ENCODE measurements at regions of chr2 and their contacts with region 1.

Region 1: GRCh38 chr2:142756430-142756829 is 121.0 kb upstream of the KYNU start:
- DNase-seq: peak; percentile 64
- H3K4me3 ChIP-seq: no peak overlapping the region
- H3K27ac ChIP-seq: no peak overlapping the region
- H3K4me1 ChIP-seq: peaks cover 2% of the 10 kb centered on the region
- H3K27me3 ChIP-seq: no peaks in the 10 kb centered on the region
- CTCF ChIP-seq: no peak

Region 2: GRCh38 chr2:141242008-141242407 is 1514.4 kb before region 1 on chr2:
- CTCF ChIA-PET with region 1: no interaction called
- dilution Hi-C with region 1: no loop called
- in situ Hi-C with region 1: no loop called
- intact Hi-C with region 1: no loop called
- DNase-seq: no peak
- H3K4me3 ChIP-seq: no peak overlapping the region
- H3K27ac ChIP-seq: no peak overlapping the region
- H3K4me1 ChIP-seq: no peaks in the 10 kb centered on the region
- H3K27me3 ChIP-seq: no peaks in the 10 kb centered on the region
- CTCF ChIP-seq: no peak

Region 3: GRCh38 chr2:142315346-142315745 is 441.1 kb before region 1 on chr2:
- CTCF ChIA-PET with region 1: no interaction called
- dilution Hi-C with region 1: no loop called
- in situ Hi-C with region 1: no loop called
- intact Hi-C with region 1: no loop called
- DNase-seq: no peak
- H3K4me3 ChIP-seq: no peak overlapping the region
- H3K27ac ChIP-seq: no peak overlapping the region
- H3K4me1 ChIP-seq: no peaks in the 10 kb centered on the region
- H3K27me3 ChIP-seq: no peaks in the 10 kb centered on the region
- CTCF ChIP-seq: no peak

Region 4: DNA sequence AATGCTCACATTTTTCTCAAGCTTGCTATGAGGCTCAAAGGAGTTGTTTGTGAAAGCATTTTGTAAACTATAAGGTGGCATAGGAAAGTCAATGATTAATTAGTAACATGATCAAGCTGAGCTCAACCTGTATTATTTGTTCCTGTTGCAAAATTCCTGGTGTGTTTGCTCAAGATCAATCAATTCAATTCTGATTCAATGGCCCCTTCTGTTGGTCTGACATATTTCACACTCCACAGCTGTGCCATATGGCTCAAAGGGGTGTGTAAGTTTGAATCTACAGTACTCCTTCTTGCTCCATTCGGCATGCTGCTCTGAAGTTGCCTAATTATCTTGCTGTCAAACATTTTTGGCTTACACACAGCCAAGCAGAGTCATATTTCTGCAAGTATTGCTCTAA is 284.0 kb before region 1 on chr2:
- CTCF ChIA-PET with region 1: no interaction called
- dilution Hi-C with region 1: no loop called
- in situ Hi-C with region 1: no loop called
- intact Hi-C with region 1: no loop called
- DNase-seq: no peak
- H3K4me3 ChIP-seq: no peak overlapping the region
- H3K27ac ChIP-seq: no peak overlapping the region
- H3K4me1 ChIP-seq: no peaks in the 10 kb centered on the region
- H3K27me3 ChIP-seq: no peaks in the 10 kb centered on the region
- CTCF ChIP-seq: no peak

Region 5: DNA sequence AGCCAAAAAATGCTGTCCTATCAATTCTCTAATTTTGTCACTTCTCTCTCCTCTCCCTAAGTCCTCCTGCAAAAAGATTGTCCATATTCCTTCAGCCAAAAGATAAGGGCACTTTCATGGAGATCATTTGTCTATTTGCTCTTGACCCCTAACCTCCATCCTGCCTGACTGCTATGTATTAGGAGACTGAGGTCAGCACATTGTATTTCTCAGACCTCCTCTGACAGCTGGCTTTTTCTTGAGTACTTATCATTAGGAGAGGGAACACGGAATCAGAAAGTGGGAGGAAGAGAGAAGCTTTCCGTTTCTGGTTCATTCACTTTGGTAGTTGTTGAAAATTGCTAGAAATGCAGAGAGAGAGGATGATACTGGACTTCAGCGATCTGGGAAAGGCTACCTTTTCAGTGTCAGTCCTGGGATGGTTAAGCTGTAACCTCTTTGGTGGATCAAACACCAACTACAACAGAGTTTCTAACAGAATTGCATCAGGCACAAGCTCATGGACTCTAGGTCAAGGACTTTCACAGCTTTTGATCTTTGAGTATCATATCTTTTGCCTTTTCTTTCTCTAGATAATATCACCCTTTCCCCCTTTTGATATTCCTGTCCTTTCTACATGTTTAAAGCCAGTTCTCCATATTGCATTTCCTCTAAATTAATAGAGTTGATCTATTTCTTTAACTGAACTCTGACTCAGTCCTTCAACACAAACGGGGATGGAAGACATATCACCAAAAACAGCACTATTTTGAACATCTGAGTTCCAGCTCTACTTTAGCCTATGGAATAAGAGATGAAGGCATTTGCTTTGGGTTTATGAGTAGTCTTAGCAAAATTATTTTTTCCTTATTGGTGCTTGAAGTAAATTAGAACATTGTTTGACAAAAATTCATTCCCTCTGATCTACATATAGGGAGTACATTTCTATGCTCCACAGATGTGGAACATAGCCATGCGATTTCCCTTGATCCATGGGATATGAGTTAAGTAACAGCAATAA is 57.7 kb after region 1 on chr2:
- CTCF ChIA-PET with region 1: no interaction called
- dilution Hi-C with region 1: loop called (anchors 5 kb)
- in situ Hi-C with region 1: no loop called
- intact Hi-C with region 1: no loop called
- DNase-seq: no peak
- H3K4me3 ChIP-seq: no peak overlapping the region
- H3K27ac ChIP-seq: no peak overlapping the region
- H3K4me1 ChIP-seq: no peaks in the 10 kb centered on the region
- H3K27me3 ChIP-seq: no peaks in the 10 kb centered on the region
- CTCF ChIP-seq: no peak

Region 6: GRCh38 chr2:142868281-142868762 is 111.9 kb after region 1 on chr2:
- CTCF ChIA-PET with region 1: no interaction called
- dilution Hi-C with region 1: no loop called
- in situ Hi-C with region 1: no loop called
- intact Hi-C with region 1: loop called (anchors 10 kb)
- DNase-seq: peak; percentile 98
- H3K4me3 ChIP-seq: peak overlapping the region in 1 of 3 experiments; percentile 14
- H3K27ac ChIP-seq: peak overlapping the region; percentile 98
- H3K4me1 ChIP-seq: peaks cover 40% of the 10 kb centered on the region
- H3K27me3 ChIP-seq: no peaks in the 10 kb centered on the region
- CTCF ChIP-seq: no peak